Posterior vena cava (tissue), 2 donors: ENCODE measurements at regions of chr6 and their contacts with region 1.

Region 1: DNA sequence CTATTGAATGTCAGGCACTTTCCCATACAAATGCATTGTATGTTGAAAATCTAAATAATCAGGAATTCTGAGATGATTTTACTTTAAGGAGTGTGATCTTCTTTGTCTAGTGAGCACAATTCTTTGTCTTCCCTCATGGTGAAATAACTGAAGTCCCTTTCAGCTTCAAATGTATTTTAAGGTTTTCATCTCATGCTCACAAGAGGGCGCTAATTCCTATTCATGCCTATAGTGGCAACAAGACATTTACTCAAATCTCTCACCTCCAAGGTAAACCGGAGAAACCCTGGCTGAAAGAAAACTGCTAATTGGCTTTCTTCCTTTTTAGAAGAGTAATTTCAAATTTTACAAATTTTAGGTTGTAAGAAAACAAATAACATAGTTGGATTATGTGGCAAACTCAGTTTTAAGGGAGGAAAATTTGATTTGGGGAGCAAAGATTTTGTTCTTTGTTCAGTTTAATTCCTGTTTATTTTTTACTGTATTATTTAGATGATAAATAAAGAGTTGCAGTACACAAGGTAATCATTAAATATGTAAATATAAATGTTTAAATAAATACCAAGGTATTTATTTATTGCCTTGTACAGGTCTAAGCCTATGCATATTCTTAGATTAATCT is 69.1 kb downstream of the SLC35F1 start:
- DNase-seq: no peak

Region 2: GRCh38 chr6:117906853-117907599 is 69.1 kb before region 1 on chr6 and contains the start of gene SLC35F1:
- intact Hi-C with region 1: no loop called
- DNase-seq: peak; percentile 75
- total RNA-seq, gene SLC35F1: 1.2 to 3.6 TPM

Region 3: GRCh38 chr6:118263921-118264486 is 287.9 kb after region 1 on chr6:
- intact Hi-C with region 1: loop called in 1 of 2 experiments (anchors 5 kb)
- DNase-seq: no peak